Dorsolateral prefrontal cortex (tissue), 120 donors: ENCODE measurements at regions of chr13 and their contacts with region 1.

Region 1: DNA sequence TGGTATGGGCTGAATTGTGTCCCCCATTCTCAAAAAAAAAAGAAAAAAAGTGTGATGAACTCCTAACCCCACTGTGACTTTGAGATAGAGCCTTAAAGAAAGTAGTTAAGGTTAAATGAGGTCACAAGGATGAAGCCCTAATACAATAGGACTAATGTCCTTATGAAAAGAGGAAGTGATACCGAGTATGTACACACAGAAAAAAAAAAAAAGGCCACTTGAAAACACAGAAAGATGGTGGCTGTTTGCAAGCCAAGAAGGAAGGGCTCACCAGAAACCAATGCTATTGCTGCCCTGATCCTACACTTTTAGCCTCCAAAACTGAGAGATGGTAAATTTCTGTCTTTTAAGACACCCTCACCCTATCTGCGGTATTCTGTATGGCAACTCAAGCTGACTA is 955.6 kb downstream of the PCDH17 start:
- DNase-seq: no peak
- H3K4me3 ChIP-seq: no peak overlapping the region
- H3K27ac ChIP-seq: no peak overlapping the region
- H3K27me3 ChIP-seq: peaks cover 0 to 3% (median 0%) of the 10 kb centered on the region in 45 donors
- CTCF ChIP-seq: no peak

Region 2: GRCh38 chr13:58598241-58598640 is 11.1 kb after region 1 on chr13:
- intact Hi-C with region 1: loop called in 1 of 2 experiments (anchors 1 kb)
- DNase-seq: no peak
- H3K4me3 ChIP-seq: no peak overlapping the region
- H3K27ac ChIP-seq: no peak overlapping the region
- H3K27me3 ChIP-seq: no peaks in the 10 kb centered on the region
- CTCF ChIP-seq: no peak